Naive thymus-derived CD4-positive, alpha-beta T cell (primary cell): ENCODE measurements at regions of chr6 and their contacts with region 1.

Region 1: GRCh38 chr6:90036963-90037362 is 142.7 kb downstream of the GJA10 start:
- DNase-seq: no peak
- ATAC-seq: no peak
- H3K4me3 ChIP-seq: no peak overlapping the region
- H3K4me3 Mint-ChIP-seq: peak overlapping the region in 4 of 10 donors; percentile 2 to 43 (median 19)
- H3K27ac ChIP-seq: no peak overlapping the region
- H3K27ac Mint-ChIP-seq: peak overlapping the region in 6 of 9 donors; percentile 33 to 80 (median 74)
- H3K4me1 ChIP-seq: peaks cover 7 to 15% of the 10 kb centered on the region in 2 donors
- H3K4me1 Mint-ChIP-seq: peaks cover 28 to 78% (median 70%) of the 10 kb centered on the region in 7 donors
- H3K27me3 ChIP-seq: no peaks in the 10 kb centered on the region
- H3K27me3 Mint-ChIP-seq: no peaks in the 10 kb centered on the region

Region 2: GRCh38 chr6:90025523-90026061 is 11.4 kb before region 1 on chr6:
- CTCF ChIA-PET with region 1: no interaction called
- POLR2A ChIA-PET with region 1: interaction called, 4 read pairs
- intact Hi-C with region 1: loop called in 1 of 2 experiments (anchors 1 kb)
- DNase-seq: peak in 1 of 9 donors; percentile 48
- ATAC-seq: no peak
- H3K4me3 ChIP-seq: no peak overlapping the region
- H3K4me3 Mint-ChIP-seq: peak overlapping the region in 3 of 10 donors; percentile 18 to 30 (median 24)
- H3K27ac ChIP-seq: no peak overlapping the region
- H3K27ac Mint-ChIP-seq: peak overlapping the region in 8 of 9 donors; percentile 1 to 81 (median 50)
- H3K4me1 ChIP-seq: peaks cover 6 to 38% of the 10 kb centered on the region in 2 donors
- H3K4me1 Mint-ChIP-seq: peaks cover 38 to 99% (median 90%) of the 10 kb centered on the region in 7 donors
- H3K27me3 ChIP-seq: no peaks in the 10 kb centered on the region
- H3K27me3 Mint-ChIP-seq: no peaks in the 10 kb centered on the region

Region 3: DNA sequence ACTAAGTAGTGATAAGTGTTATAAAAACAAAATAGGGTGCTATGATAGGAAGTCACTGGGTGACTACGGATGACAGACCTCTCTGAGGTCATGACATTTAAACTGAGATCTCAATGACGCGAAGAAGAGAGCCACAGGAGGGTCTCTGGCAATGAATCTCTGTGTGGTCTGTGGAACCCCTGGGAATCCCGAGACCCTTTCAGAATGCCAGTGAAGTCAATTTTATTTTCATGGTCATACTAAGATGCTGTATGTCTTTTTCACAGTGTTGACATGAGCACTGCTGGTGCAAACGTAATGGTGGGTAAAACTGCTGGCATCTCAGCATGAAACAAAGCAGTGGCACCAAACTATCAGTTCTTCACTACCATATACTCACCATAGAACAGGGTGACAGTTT is 12.3 kb after region 1 on chr6:
- CTCF ChIA-PET with region 1: no interaction called
- POLR2A ChIA-PET with region 1: no interaction called
- intact Hi-C with region 1: loop called in 1 of 2 experiments (anchors 1 kb)
- DNase-seq: no peak
- ATAC-seq: no peak
- H3K4me3 ChIP-seq: no peak overlapping the region
- H3K4me3 Mint-ChIP-seq: peak overlapping the region in 2 of 10 donors; percentile 9 to 12
- H3K27ac ChIP-seq: no peak overlapping the region
- H3K27ac Mint-ChIP-seq: peak overlapping the region; percentile 32 to 76 (median 52)
- H3K4me1 ChIP-seq: peaks cover 0 to 4% of the 10 kb centered on the region in 2 donors
- H3K4me1 Mint-ChIP-seq: peaks cover 25 to 64% (median 48%) of the 10 kb centered on the region in 7 donors
- H3K27me3 ChIP-seq: no peaks in the 10 kb centered on the region
- H3K27me3 Mint-ChIP-seq: no peaks in the 10 kb centered on the region